ENCODE measurements at regions of chr1 and their contacts with region 1.

Region 1: GRCh38 chr1:212035123-212035834 is at the starts of genes DTL and INTS7:
- DNase-seq: peak; percentile 98
- ATAC-seq: peak; percentile 92
- H3K4me3 Mint-ChIP-seq: peak within 1 kb of the TSS; percentile 98
- H3K27ac Mint-ChIP-seq: peak within 1 kb of the TSS; percentile 99
- H3K4me1 Mint-ChIP-seq: peaks cover 32% of the 10 kb centered on the region
- H3K27me3 Mint-ChIP-seq: peaks cover 3% of the 10 kb centered on the region; the same call in 1 of the 2 replicates
- CTCF ChIP-seq: peak; percentile 66; the same call in 1 of the 2 replicates
- total RNA-seq, gene DTL: 38.8 to 52.3 TPM (median 43.0 TPM) in 3 replicates
- total RNA-seq, gene INTS7: 16.3 to 17.3 TPM (median 17.2 TPM) in 3 replicates

Region 2: DNA sequence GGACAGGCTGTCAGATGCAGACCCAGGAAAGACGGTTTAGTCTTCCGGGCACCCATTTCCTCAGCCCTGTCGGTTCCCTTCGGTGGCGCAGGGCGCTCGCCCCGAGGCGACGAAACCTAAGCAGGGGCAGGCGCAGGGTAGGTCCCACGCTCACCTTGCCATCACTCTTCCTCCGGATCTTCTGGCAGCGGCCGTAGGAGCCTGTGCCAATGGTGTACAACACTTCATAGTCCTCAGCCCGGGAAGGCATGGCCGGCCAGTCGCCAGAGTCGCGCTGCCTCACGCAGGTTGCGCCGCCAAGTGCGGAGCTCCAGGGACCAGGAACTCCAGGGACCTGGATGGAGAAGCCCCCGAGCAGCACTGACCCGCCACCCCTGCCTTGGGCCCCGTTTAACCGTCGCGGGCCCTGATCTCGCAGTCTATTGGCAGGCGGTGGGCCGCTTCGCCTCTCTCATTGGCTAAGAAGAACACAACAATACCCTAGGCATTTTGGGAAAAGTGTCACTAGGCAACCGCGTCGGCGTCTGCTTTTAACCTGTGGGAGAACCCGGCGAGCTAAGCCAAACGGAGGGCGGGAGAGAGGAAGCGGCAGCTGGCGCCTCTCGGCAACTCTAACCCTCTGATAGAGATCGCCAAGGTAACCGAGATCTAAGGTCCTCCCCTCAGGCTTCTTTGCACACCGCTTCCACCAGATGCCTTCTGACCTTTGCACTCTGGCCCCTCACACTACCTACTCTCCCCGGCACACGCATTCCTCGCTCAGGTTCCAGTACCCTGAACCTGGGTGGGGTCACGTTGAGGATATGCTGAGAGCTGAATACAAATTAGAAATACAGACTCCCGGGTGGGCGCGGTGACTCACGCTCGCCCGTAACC is 359.8 kb before region 1 on chr1 and contains the start of gene NEK2:
- CTCF ChIA-PET with region 1: interaction called, 75 read pairs
- POLR2A ChIA-PET with region 1: interaction called, 7 read pairs
- DNase-seq: peak; percentile 96
- ATAC-seq: peak; percentile 94
- H3K4me3 Mint-ChIP-seq: peak within 1 kb of the TSS; percentile 96
- H3K27ac Mint-ChIP-seq: peak within 1 kb of the TSS; percentile 97
- H3K4me1 Mint-ChIP-seq: peaks cover 12% of the 10 kb centered on the region
- H3K27me3 Mint-ChIP-seq: no peaks in the 10 kb centered on the region
- CTCF ChIP-seq: no peak
- total RNA-seq, gene NEK2: 22.7 to 25.2 TPM (median 23.5 TPM) in 3 replicates

Region 3: GRCh38 chr1:211762206-211762605 is 273.1 kb before region 1 on chr1:
- CTCF ChIA-PET with region 1: no interaction called
- POLR2A ChIA-PET with region 1: no interaction called
- DNase-seq: no peak
- ATAC-seq: no peak
- H3K4me3 Mint-ChIP-seq: no peak overlapping the region
- H3K27ac Mint-ChIP-seq: no peak overlapping the region
- H3K4me1 Mint-ChIP-seq: no peaks in the 10 kb centered on the region
- H3K27me3 Mint-ChIP-seq: no peaks in the 10 kb centered on the region
- CTCF ChIP-seq: no peak

Region 4: GRCh38 chr1:211814313-211814712 is 221.0 kb before region 1 on chr1:
- CTCF ChIA-PET with region 1: interaction called, 10 read pairs
- POLR2A ChIA-PET with region 1: no interaction called
- DNase-seq: no peak
- ATAC-seq: no peak
- H3K4me3 Mint-ChIP-seq: no peak overlapping the region
- H3K27ac Mint-ChIP-seq: no peak overlapping the region
- H3K4me1 Mint-ChIP-seq: no peaks in the 10 kb centered on the region
- H3K27me3 Mint-ChIP-seq: no peaks in the 10 kb centered on the region
- CTCF ChIP-seq: no peak

Region 5: DNA sequence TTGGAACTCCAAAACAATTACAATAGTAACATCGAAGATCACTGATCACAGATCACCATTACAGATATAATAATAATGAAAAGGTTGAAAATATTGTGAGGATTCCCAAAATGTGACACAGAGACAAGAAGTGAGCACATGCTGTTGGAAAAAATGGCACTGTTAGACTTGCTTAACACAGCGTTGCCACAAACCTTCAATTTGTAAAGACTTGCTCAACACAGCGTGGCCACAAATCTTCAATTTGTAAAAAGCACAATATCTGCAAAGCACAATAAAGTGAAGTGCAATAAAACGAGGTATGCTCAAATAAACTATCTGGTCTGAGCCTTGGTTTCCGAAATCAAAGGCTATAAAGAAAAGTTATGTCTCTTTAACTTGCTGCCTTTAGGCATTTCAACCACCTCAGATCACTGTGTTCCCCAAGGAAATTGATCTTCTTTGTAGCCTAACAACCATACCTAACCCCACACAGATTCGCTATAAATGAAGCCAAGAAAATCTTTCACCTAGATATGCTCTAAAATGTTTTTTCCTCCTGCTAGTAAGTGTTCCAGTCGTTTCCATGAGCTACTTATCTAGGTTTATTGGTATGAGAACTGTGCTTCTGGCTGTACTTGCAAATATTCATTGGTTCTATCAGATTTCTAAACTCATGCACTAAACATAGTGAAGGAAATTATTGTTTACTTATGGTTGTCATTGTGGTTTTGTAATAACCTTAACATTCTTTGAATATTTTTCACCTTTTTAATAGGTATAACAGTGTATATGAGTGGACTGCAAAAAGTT is 191.6 kb before region 1 on chr1:
- CTCF ChIA-PET with region 1: no interaction called
- POLR2A ChIA-PET with region 1: no interaction called
- DNase-seq: no peak
- ATAC-seq: no peak
- H3K4me3 Mint-ChIP-seq: no peak overlapping the region
- H3K27ac Mint-ChIP-seq: no peak overlapping the region
- H3K4me1 Mint-ChIP-seq: no peaks in the 10 kb centered on the region
- H3K27me3 Mint-ChIP-seq: no peaks in the 10 kb centered on the region
- CTCF ChIP-seq: no peak

Region 6: DNA sequence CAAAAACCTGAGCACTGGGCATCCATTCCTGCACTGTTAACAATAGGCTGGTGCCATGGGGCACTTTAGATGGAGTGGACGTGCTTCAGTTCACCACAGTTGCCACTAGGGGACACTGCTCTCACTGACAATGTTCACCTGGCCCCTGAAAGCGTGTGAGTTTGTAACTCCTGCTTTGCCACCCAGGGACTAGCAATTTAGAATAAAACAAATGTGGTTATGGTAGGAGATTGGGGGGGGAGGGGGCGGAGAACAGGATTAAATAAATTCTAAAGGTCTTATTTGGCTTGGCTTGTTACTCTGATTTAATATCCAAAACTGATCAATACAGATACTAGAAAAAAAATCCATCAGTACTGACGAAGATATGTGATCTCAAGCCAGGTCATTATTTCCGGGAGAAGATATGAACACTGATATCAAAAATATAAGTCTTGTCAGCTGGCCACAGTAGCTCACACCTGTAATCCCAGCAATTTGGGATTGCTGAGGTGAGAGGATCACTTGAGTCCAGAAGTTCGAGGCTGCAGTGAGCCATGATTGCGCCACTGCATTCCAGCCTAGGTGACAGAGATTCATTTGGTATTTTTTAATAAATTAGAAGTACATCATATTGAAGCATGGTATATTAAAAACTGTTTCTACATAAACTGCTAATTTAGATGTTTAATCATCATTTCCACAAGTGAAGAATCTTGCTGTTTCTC is 23.1 kb before region 1 on chr1:
- CTCF ChIA-PET with region 1: interaction called, 17 read pairs
- POLR2A ChIA-PET with region 1: no interaction called
- DNase-seq: peak; percentile 70
- ATAC-seq: peak; percentile 99
- H3K4me3 Mint-ChIP-seq: no peak overlapping the region
- H3K27ac Mint-ChIP-seq: no peak overlapping the region
- H3K4me1 Mint-ChIP-seq: no peaks in the 10 kb centered on the region
- H3K27me3 Mint-ChIP-seq: no peaks in the 10 kb centered on the region
- CTCF ChIP-seq: peak; percentile 81

Region 7: GRCh38 chr1:212127219-212127618 is 91.9 kb after region 1 on chr1:
- CTCF ChIA-PET with region 1: interaction called, 13 read pairs
- POLR2A ChIA-PET with region 1: no interaction called
- DNase-seq: peak; percentile 43
- ATAC-seq: peak; percentile 89
- H3K4me3 Mint-ChIP-seq: no peak overlapping the region
- H3K27ac Mint-ChIP-seq: peak overlapping the region; percentile 95
- H3K4me1 Mint-ChIP-seq: peaks cover 33% of the 10 kb centered on the region
- H3K27me3 Mint-ChIP-seq: no peaks in the 10 kb centered on the region
- CTCF ChIP-seq: no peak

Region 8: GRCh38 chr1:212368073-212368484 is 332.8 kb after region 1 on chr1:
- CTCF ChIA-PET with region 1: interaction called, 13 read pairs
- POLR2A ChIA-PET with region 1: no interaction called
- DNase-seq: peak; percentile 59
- ATAC-seq: peak; percentile 96
- H3K4me3 Mint-ChIP-seq: no peak overlapping the region
- H3K27ac Mint-ChIP-seq: no peak overlapping the region
- H3K4me1 Mint-ChIP-seq: no peaks in the 10 kb centered on the region
- H3K27me3 Mint-ChIP-seq: no peaks in the 10 kb centered on the region
- CTCF ChIP-seq: peak; percentile 76